Activated T-helper 2 cell treated with anti-CD3 and anti-CD28 coated beads, Interferon-gamma antibody, Interleukin-2, Interleukin-4, amounts not matched to agents 10 μg/mL and 5 μg/mL and 100 μg/mL, durations not matched to agents 14 hours and 24 hours and 36 hours (primary cell): ENCODE measurements at regions of chr3 and their contacts with region 1.

Region 1: DNA sequence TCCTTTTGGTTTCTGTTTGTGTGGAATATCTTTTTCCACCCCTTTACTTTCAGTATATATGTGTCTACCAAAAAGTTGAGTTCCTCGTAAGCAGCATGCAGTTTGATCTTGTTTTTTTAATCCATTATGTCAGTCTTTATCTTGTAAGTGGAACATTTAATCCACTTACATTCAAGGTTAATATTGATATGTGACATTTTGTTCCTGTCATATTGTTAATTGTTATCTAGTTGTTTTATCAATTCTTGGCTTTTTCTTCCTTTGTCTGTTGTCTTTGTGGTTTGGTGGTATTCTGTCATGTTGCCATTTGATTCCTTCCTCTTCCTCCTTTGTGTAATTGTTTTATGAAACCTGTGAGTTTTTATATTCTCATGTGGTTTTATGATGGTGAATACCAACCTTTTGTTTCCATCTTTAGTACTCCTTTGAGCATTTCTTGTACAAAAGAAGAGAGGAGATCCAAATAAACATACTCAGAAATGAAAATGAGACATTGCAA is 43.4 kb upstream of the XCR1 start:
- DNase-seq: no peak
- H3K4me3 Mint-ChIP-seq: peak overlapping the region; percentile 3
- H3K27ac Mint-ChIP-seq: peak overlapping the region; percentile 70
- H3K4me1 Mint-ChIP-seq: peaks cover 60% of the 10 kb centered on the region
- H3K27me3 Mint-ChIP-seq: peaks cover 26% of the 10 kb centered on the region

Region 2: GRCh38 chr3:46017720-46018119 is 52.9 kb before region 1 on chr3:
- intact Hi-C with region 1: loop called (anchors 1 kb)
- DNase-seq: no peak
- H3K4me3 Mint-ChIP-seq: peak overlapping the region; percentile 24
- H3K27ac Mint-ChIP-seq: peak overlapping the region; percentile 70
- H3K4me1 Mint-ChIP-seq: peaks cover 48% of the 10 kb centered on the region
- H3K27me3 Mint-ChIP-seq: peaks cover 7% of the 10 kb centered on the region

Region 3: DNA sequence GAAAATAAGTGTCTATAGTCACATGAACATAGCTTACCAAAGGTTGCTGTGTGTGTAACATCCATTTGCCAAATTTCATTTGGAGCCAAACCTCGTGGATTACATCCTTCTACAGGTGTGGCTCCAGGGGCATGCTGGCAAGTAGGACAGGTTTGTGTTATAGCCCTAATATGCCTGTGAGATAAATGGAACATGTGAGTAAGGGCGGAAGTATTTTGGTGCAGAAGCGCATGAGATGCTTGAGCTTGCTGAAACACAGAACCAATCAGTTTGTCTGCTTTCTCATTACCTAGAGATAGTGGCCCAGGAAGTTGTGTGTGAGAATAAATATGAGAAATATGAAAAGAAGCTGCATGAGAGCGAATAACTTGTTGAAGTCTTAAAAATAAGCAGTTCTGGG is 21.5 kb before region 1 on chr3:
- intact Hi-C with region 1: loop called (anchors 2 kb)
- DNase-seq: no peak
- H3K4me3 Mint-ChIP-seq: no peak overlapping the region
- H3K27ac Mint-ChIP-seq: no peak overlapping the region
- H3K4me1 Mint-ChIP-seq: peaks cover 35% of the 10 kb centered on the region
- H3K27me3 Mint-ChIP-seq: peaks cover 27% of the 10 kb centered on the region

Region 4: GRCh38 chr3:46059432-46059831 is 11.2 kb before region 1 on chr3:
- intact Hi-C with region 1: no loop called
- DNase-seq: no peak
- H3K4me3 Mint-ChIP-seq: no peak overlapping the region
- H3K27ac Mint-ChIP-seq: no peak overlapping the region
- H3K4me1 Mint-ChIP-seq: peaks cover 5% of the 10 kb centered on the region
- H3K27me3 Mint-ChIP-seq: peaks cover 60% of the 10 kb centered on the region

Region 5: DNA sequence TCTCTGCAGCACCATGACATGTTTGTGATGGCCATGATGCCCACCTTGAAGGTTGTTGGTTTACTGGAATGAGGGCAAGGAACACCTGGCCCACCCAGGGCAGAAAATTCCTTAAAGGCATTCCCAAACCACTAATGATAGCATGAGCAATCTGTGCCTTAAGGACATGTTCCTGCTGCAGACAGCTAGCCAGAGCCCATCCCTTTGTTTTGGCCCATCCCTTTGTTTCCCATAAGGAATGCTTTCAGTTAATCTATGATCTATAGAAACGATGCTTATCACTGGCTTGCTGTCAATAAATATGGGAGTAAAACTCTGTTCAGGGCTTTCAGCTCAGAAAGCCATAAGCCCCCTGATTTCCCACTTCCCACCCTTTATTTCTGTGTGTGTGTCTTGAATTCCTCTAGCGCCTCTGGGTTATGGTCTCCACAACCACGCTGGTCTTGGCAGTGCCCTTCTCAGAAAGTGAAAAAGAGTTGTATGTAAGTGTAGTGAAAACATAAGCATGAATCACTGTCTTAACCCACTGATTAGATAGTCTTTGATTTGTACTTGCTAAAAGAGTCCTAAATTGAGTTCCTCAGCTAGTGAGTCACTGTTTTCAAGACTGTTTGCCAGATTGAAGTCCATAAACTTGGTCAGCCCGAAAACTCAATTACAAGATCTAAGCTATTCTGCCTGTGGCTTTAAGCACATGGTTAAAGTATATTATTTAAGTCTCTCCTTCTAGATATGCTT is 264.3 kb after region 1 on chr3:
- intact Hi-C with region 1: no loop called
- DNase-seq: no peak
- H3K4me3 Mint-ChIP-seq: no peak overlapping the region
- H3K27ac Mint-ChIP-seq: no peak overlapping the region
- H3K4me1 Mint-ChIP-seq: peaks cover 5% of the 10 kb centered on the region
- H3K27me3 Mint-ChIP-seq: peaks cover 44% of the 10 kb centered on the region